CD4-positive, alpha-beta memory T cell (primary cell): ENCODE measurements at regions of chr1 and their contacts with region 1.

Region 1: GRCh38 chr1:32413507-32414185 is 19.4 kb upstream of the BSDC1 start:
- DNase-seq: peak; percentile 70 to 81 (median 73)
- H3K4me3 ChIP-seq: no peak overlapping the region
- H3K4me3 Mint-ChIP-seq: no peak overlapping the region
- H3K27ac ChIP-seq: no peak overlapping the region
- H3K27ac Mint-ChIP-seq: peak overlapping the region in 2 of 7 donors; percentile 40 to 54
- H3K4me1 ChIP-seq: no peaks in the 10 kb centered on the region
- H3K4me1 Mint-ChIP-seq: peaks cover 2 to 3% (median 3%) of the 10 kb centered on the region in 4 donors
- H3K27me3 ChIP-seq: no peaks in the 10 kb centered on the region
- H3K27me3 Mint-ChIP-seq: peaks cover 8 to 9% of the 10 kb centered on the region in 2 donors

Region 2: DNA sequence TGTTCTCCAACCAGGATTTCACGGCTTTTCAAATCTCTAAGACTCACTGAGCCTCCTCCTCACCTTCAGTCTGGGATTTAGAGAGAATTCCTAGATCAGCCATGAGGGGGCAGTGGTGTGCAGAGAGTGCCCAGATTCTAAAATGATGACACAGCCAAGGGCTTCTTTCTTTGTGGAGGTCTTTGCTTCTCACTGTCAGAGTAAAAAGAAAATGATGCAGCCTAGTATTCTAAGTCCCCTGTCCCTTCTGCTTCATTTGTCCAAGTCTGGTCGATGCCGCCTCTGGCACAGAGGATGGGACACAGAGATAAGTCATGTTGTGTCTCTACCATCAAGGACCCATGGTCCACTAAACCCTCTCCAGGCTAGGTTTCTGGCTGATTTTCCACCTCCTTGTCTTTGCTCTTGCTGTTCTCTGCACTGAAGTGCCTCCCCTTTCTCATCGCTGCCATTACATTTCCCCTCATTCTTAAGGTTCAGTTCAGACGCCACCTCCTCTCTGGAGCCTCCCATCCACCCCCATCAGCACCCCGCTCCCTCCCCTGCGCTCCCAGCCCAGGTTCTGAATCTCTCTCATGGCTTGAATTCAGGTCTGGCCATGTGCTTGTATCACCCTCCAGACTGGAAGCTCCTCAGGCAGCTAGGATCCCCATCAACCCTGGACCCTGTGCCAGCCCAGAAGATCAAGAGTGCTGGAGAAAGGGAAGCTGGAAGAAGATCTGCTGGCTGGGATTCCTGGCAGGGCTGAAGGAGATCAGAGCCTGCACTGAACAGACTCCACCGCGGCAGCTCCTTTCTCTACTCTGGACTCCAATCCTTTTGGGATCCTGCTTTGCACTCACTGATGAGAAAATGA is 849.3 kb before region 1 on chr1:
- CTCF ChIA-PET with region 1: no interaction called
- POLR2A ChIA-PET with region 1: no interaction called
- intact Hi-C with region 1: loop called (anchors 5 kb)
- DNase-seq: peak; percentile 30 to 46 (median 36)
- H3K4me3 ChIP-seq: no peak overlapping the region
- H3K4me3 Mint-ChIP-seq: no peak overlapping the region
- H3K27ac ChIP-seq: no peak overlapping the region
- H3K27ac Mint-ChIP-seq: no peak overlapping the region
- H3K4me1 ChIP-seq: no peaks in the 10 kb centered on the region
- H3K4me1 Mint-ChIP-seq: no peaks in the 10 kb centered on the region
- H3K27me3 ChIP-seq: no peaks in the 10 kb centered on the region
- H3K27me3 Mint-ChIP-seq: peaks cover 15 to 30% of the 10 kb centered on the region in 2 donors

Region 3: DNA sequence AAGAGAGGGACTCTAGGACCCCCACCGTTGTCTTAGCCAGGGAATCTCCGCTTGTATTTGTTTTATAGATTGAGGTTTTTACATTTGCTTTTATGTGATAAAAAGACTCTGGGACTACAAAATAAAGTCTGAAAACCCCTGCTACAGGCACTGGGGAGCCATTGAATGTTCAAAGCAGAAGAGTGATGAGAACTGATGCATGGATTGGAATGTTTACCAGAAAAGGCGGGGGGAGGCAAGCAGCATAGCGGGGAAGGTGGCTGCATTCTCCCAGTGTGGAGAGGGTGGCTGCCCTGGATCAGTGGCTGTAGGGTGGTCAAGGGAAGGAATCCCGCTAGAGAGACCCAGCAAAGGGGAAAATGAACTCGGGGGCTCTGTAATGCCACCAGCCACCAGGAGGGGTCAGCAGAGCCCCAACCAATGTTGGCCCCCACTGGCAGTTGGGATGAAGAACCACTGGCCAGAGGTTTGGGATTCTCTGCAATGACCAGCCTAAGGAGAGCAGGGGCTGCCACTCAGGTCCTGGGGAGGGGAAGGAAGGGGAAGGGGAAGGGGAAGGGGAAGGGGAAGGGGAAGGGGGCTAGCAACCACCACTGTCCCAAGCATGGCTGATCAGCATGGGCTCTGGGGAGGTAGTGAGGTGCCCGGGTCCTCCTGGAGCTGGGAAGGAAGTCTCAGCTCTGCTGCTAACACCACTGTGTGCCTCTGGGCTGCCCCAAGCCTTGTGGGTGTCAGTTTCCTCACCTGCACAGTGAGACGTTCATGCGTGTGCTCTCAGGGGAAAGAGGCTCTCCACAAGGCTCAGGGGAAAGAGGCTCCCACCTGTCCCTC is 749.8 kb before region 1 on chr1:
- CTCF ChIA-PET with region 1: no interaction called
- POLR2A ChIA-PET with region 1: no interaction called
- intact Hi-C with region 1: loop called (anchors 5 kb)
- DNase-seq: peak; percentile 36 to 56 (median 39)
- H3K4me3 ChIP-seq: no peak overlapping the region
- H3K4me3 Mint-ChIP-seq: no peak overlapping the region
- H3K27ac ChIP-seq: no peak overlapping the region
- H3K27ac Mint-ChIP-seq: no peak overlapping the region
- H3K4me1 ChIP-seq: no peaks in the 10 kb centered on the region
- H3K4me1 Mint-ChIP-seq: no peaks in the 10 kb centered on the region
- H3K27me3 ChIP-seq: no peaks in the 10 kb centered on the region
- H3K27me3 Mint-ChIP-seq: peaks cover 4 to 7% of the 10 kb centered on the region in 2 donors

Region 4: GRCh38 chr1:32400876-32401631 is 12.6 kb before region 1 on chr1:
- CTCF ChIA-PET with region 1: interaction called, 40 read pairs
- POLR2A ChIA-PET with region 1: no interaction called
- intact Hi-C with region 1: loop called (anchors 1 kb)
- DNase-seq: peak in 4 of 5 donors; percentile 28 to 48 (median 35)
- H3K4me3 ChIP-seq: no peak overlapping the region
- H3K4me3 Mint-ChIP-seq: peak overlapping the region in 1 of 8 donors; percentile 54
- H3K27ac ChIP-seq: no peak overlapping the region
- H3K27ac Mint-ChIP-seq: peak overlapping the region in 1 of 7 donors; percentile 5
- H3K4me1 ChIP-seq: no peaks in the 10 kb centered on the region
- H3K4me1 Mint-ChIP-seq: peaks cover 0 to 1% (median 0%) of the 10 kb centered on the region in 4 donors
- H3K27me3 ChIP-seq: no peaks in the 10 kb centered on the region
- H3K27me3 Mint-ChIP-seq: peaks cover 1 to 2% of the 10 kb centered on the region in 2 donors

Region 5: GRCh38 chr1:32426489-32427255 is 13.0 kb after region 1 on chr1:
- CTCF ChIA-PET with region 1: interaction called, 13 read pairs
- POLR2A ChIA-PET with region 1: no interaction called
- intact Hi-C with region 1: no loop called
- DNase-seq: no peak
- H3K4me3 ChIP-seq: no peak overlapping the region
- H3K4me3 Mint-ChIP-seq: peak overlapping the region in 1 of 8 donors; percentile 55
- H3K27ac ChIP-seq: no peak overlapping the region
- H3K27ac Mint-ChIP-seq: no peak overlapping the region
- H3K4me1 ChIP-seq: no peaks in the 10 kb centered on the region
- H3K4me1 Mint-ChIP-seq: peaks cover 0 to 4% (median 0%) of the 10 kb centered on the region in 4 donors
- H3K27me3 ChIP-seq: peaks cover 8% of the 10 kb centered on the region
- H3K27me3 Mint-ChIP-seq: peaks cover 27 to 37% of the 10 kb centered on the region in 2 donors